Heart left ventricle (tissue), 16 donors: ENCODE measurements at regions of chr2 and their contacts with region 1.

Region 1: GRCh38 chr2:148565272-148565894 is 79.2 kb upstream of the EPC2 start:
- DNase-seq: no peak
- ATAC-seq: peak in 3 of 4 donors; percentile 42 to 59 (median 44)
- H3K4me3 ChIP-seq: no peak overlapping the region
- H3K27ac ChIP-seq: no peak overlapping the region
- H3K4me1 ChIP-seq: no peaks in the 10 kb centered on the region
- H3K27me3 ChIP-seq: peaks cover 0 to under 1% (median 0%) of the 10 kb centered on the region in 9 donors
- CTCF ChIP-seq: peak in 11 of 12 donors; percentile 14 to 55 (median 30)
- POLR2A ChIP-seq: no peak

Region 2: GRCh38 chr2:148634749-148635148 is 69.4 kb after region 1 on chr2:
- intact Hi-C with region 1: loop called in 1 of 10 experiments (anchors 10 kb)
- DNase-seq: no peak
- ATAC-seq: no peak
- H3K4me3 ChIP-seq: no peak overlapping the region
- H3K27ac ChIP-seq: no peak overlapping the region
- H3K4me1 ChIP-seq: no peaks in the 10 kb centered on the region
- H3K27me3 ChIP-seq: no peaks in the 10 kb centered on the region
- CTCF ChIP-seq: no peak
- POLR2A ChIP-seq: no peak